ENCODE measurements at regions of chr12 and their contacts with region 1.

Region 1: GRCh38 chr12:65878544-65878943 is 54.3 kb downstream of the HMGA2 start:
- DNase-seq: peak; percentile 71 to 85
- H3K4me3 ChIP-seq: no peak overlapping the region
- H3K27ac ChIP-seq: no peak overlapping the region
- H3K4me1 ChIP-seq: peaks cover 51% of the 10 kb centered on the region
- H3K27me3 ChIP-seq: no peaks in the 10 kb centered on the region
- CTCF ChIP-seq: peak; percentile 56

Region 2: GRCh38 chr12:64890873-64891468 is 987.6 kb before region 1 on chr12:
- CTCF ChIA-PET with region 1: no interaction called
- POLR2A ChIA-PET with region 1: no interaction called
- intact Hi-C with region 1: loop called (anchors 2 kb)
- DNase-seq: peak in 1 of 2 experiments; percentile 57
- H3K4me3 ChIP-seq: no peak overlapping the region
- H3K27ac ChIP-seq: no peak overlapping the region; the same call in 1 of the 2 replicates
- H3K4me1 ChIP-seq: peaks cover 21% of the 10 kb centered on the region
- H3K27me3 ChIP-seq: no peaks in the 10 kb centered on the region
- CTCF ChIP-seq: peak; percentile 88

Region 3: DNA sequence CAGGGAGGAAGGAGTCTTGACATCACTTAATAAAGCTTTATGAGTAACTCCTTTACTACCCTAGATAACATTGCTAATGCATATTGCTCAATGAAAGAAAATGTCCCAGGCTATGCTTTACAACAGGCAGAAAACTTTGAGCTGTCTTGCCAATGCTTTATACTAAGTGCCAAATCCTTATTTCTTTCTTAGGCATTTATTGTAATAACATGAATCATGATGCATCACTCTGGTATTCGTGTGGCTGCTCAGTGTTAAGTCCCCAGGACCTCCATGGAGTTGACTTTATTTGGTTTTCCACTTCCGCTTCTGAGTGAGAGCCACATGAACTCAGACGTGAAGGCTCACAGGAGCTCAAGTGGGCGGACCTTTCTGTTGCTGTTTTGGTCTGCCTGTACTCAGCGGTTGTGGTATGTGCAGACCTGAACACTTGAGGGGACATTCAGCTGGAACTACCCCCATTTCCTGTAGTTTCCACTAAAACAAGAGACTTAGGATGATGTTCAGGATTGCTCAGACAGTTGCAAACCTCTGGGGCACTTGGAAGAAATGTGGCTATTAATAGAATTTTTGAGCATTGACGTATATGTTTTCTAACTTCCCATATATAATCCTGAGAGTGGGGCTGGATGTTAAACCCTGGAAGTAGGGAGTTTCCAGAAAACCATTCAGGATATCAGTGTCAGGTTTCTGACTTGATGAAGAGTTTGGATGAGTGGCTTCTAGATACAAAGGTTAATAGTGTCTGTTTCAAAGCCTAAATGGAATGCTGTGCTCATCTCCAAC is 341.5 kb before region 1 on chr12:
- CTCF ChIA-PET with region 1: no interaction called
- POLR2A ChIA-PET with region 1: no interaction called
- intact Hi-C with region 1: loop called (anchors 5 kb)
- DNase-seq: peak; percentile 55 to 60
- H3K4me3 ChIP-seq: no peak overlapping the region
- H3K27ac ChIP-seq: no peak overlapping the region
- H3K4me1 ChIP-seq: peaks cover 7% of the 10 kb centered on the region; the same call in 1 of the 2 replicates
- H3K27me3 ChIP-seq: no peaks in the 10 kb centered on the region
- CTCF ChIP-seq: no peak

Region 4: GRCh38 chr12:65695113-65695865 is 183.3 kb before region 1 on chr12:
- CTCF ChIA-PET with region 1: interaction called, 9 read pairs
- POLR2A ChIA-PET with region 1: no interaction called
- intact Hi-C with region 1: loop called (anchors 5 kb)
- DNase-seq: peak; percentile 54 to 86
- H3K4me3 ChIP-seq: no peak overlapping the region
- H3K27ac ChIP-seq: peak overlapping the region; percentile 24
- H3K4me1 ChIP-seq: peaks cover 25% of the 10 kb centered on the region
- H3K27me3 ChIP-seq: no peaks in the 10 kb centered on the region
- CTCF ChIP-seq: no peak

Region 5: GRCh38 chr12:65986047-65986446 is 107.5 kb after region 1 on chr12:
- CTCF ChIA-PET with region 1: no interaction called
- POLR2A ChIA-PET with region 1: no interaction called
- intact Hi-C with region 1: loop called (anchors 1 kb)
- DNase-seq: peak in 1 of 2 experiments; percentile 32
- H3K4me3 ChIP-seq: no peak overlapping the region
- H3K27ac ChIP-seq: no peak overlapping the region
- H3K4me1 ChIP-seq: no peaks in the 10 kb centered on the region
- H3K27me3 ChIP-seq: no peaks in the 10 kb centered on the region
- CTCF ChIP-seq: no peak

Region 6: DNA sequence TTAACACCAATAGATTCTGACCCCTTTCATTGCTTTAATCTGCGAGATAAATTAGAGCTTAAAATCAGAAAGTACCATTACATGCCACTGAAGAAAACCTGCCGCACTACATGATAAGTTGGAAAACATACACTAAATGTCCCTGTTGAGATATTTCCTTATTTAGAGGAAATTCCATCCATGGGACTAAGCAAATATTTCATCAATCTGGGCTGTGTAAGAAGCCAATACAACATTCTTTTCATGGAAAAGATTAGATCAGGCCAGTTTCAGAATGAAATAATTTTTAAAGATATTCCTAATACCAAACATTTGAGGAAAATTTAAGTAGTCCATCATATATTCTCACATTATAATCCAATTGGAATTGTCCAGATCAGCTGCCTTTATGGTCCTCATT is 139.2 kb after region 1 on chr12:
- CTCF ChIA-PET with region 1: no interaction called
- POLR2A ChIA-PET with region 1: no interaction called
- intact Hi-C with region 1: no loop called
- DNase-seq: no peak
- H3K4me3 ChIP-seq: no peak overlapping the region
- H3K27ac ChIP-seq: no peak overlapping the region
- H3K4me1 ChIP-seq: no peaks in the 10 kb centered on the region
- H3K27me3 ChIP-seq: no peaks in the 10 kb centered on the region
- CTCF ChIP-seq: no peak

Region 7: DNA sequence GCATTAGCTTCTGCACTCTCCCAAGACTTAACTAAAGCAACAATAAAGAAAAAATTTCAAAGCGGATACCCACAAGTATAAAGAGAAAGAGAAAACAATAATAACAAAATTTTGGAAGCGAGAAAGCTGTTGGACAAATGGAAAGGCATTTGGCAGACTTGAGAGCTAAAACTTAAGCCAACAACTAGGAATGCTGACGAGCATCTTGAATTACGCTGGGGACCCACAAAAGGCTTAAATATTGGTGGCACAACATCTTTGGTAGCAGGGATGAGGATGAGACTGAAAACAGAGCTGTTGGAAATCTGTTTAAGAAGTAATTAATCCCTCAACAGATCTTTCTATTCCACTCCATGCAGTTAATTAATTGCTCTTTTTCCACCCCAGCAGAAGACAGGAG is 202.2 kb after region 1 on chr12:
- CTCF ChIA-PET with region 1: no interaction called
- POLR2A ChIA-PET with region 1: no interaction called
- intact Hi-C with region 1: no loop called
- DNase-seq: no peak
- H3K4me3 ChIP-seq: no peak overlapping the region
- H3K27ac ChIP-seq: no peak overlapping the region
- H3K4me1 ChIP-seq: no peaks in the 10 kb centered on the region
- H3K27me3 ChIP-seq: no peaks in the 10 kb centered on the region
- CTCF ChIP-seq: no peak

Region 8: DNA sequence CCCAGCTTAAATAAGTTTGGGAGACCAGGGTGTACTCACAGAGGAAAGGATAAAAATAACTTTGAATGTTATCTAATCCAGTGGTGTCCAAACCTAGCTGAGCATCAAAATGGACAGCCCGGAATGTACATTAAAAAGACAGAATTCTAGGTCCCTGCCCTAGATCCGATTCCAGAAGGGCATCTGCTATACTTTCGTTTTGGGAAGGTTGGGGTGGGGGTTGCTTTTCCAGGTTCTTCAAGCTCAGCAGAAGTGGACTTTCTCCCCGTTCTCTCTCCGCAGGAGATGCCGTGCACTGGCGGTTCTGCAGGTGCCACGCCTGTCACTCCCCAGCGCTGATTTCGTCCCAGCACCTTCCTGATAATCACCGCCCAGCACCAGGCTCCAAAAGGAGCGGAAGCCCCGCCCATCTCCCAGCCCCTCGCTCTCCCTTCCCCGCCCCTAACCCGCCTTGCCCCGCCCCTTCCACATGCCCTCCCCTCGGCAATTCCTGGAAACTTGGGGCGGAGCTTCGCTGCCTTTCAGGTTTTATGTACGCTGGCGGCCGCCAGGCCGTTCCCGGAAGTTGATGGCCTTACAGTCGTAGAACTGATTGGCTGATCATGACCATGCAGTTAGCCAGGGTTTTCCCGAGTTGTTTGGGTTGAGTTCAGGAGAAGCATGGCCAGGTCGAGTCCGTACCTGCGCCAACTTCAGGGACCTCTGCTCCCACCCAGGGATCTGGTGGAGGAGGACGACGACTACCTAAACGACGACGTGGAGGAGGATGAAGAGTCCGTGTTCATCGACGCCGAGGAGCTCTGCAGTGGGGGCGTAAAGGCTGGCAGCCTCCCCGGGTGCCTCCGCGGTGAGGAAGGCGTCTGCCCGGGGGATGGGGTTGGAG is 423.6 kb after region 1 on chr12 and contains the start of gene HELB:
- CTCF ChIA-PET with region 1: no interaction called
- POLR2A ChIA-PET with region 1: no interaction called
- intact Hi-C with region 1: loop called (anchors 10 kb)
- DNase-seq: peak; percentile 92 to 94
- H3K4me3 ChIP-seq: peak within 1 kb of the TSS; percentile 89
- H3K27ac ChIP-seq: peak within 1 kb of the TSS; percentile 61
- H3K4me1 ChIP-seq: peaks cover 9% of the 10 kb centered on the region; the same call in 1 of the 2 replicates
- H3K27me3 ChIP-seq: no peaks in the 10 kb centered on the region
- CTCF ChIP-seq: no peak
- total RNA-seq, gene HELB: 8.2 and 10.0 TPM in 2 replicates